PC-3 (cell line): ENCODE measurements at regions of chr19 and their contacts with region 1.

Region 1: DNA sequence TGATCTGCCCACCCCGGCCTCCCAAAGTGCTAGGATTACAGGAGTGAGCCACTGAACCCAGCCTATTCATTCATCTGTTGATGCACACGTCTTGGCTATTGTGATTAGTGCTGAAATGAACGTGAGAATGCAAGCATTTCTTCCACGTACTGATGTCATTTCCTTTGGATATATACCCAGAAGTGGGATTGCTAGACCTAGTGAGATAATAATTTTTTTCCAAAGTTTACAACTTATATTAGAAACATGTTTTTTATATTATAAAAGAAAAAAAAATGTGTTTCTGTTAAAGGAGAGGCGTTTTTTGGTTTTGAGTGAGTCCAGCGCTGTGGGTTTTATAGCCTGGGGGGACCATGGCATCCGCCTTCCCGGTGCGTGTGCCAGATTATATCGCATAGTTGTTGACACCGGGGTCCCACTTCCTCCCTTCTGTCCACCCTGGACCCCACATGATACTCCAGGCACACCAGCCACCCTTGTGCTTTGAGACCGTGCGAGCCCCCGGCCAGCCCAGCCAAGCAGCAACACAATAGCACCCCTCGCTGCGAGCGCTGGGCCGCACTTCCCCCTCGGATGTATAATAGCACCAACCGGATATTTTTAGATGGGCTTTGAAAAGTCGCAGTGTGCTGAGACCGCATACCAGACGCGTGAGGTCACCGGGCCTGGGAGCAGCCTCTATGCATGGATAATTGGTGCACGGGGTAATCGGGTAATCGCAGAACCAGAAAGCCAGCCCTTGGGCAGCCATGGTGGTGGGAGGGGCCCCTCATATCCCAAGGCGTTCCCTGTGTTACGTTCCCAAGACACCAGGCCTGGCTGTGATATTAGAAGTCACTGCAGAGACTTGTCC is 59.6 kb downstream of the MYO9B start:
- DNase-seq: peak; percentile 92
- ATAC-seq: peak; percentile 96
- H3K4me3 ChIP-seq: peak overlapping the region; percentile 54; the same call in 1 of the 2 replicates
- H3K27ac ChIP-seq: peak overlapping the region; percentile 78
- H3K4me1 ChIP-seq: peaks cover 25% of the 10 kb centered on the region
- H3K27me3 ChIP-seq: no peaks in the 10 kb centered on the region
- CTCF ChIP-seq: no peak; the same call in 1 of the 2 replicates

Region 2: DNA sequence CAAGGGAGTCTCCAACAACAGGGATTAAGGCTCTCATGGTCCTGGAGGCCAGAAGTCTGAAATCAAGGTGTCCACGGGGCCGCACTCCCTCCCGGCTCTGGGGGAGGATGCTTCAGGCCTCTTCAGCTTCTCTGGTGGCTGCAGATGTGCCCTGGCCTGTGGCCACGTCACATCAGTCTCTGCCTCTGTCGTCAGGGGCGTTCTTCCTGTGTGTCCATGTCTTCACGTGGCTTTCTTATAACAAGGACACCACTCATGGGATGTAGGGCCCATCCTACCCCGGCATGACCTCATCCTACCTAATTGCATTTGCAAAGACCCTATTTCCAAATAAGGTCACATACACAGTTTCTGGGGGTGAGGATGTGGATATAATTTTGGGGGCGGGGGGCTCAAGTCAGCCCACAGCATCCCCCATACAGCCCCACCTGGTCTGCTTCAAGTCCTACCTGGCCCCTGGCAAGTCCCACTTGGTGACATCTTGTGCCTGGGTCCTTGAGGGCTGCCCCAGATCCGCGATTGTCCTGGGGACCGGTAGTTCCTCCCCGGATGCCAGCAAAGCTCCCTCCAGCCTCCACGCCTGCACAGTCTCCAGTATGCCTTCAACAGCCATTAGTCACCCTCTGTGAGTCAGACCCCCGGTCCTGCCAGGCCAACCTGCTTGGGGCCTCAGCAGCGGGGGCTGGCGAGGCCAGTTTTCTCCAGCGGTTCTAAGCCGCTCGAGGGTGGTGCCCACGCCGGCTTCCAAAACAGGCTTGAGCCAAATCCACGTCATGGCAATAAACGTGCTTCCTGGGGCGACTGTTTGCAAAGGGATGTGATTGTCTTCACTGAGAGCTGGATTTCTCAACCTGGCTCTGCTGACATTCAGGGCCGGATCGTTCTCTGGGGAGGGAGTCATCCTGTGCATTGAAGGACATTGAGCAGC is 27.4 kb before region 1 on chr19:
- CTCF ChIA-PET with region 1: no interaction called
- POLR2A ChIA-PET with region 1: interaction called, 18 read pairs
- intact Hi-C with region 1: loop called (anchors 2 kb)
- DNase-seq: peak; percentile 99
- ATAC-seq: peak; percentile 98
- H3K4me3 ChIP-seq: peak overlapping the region; percentile 15; the same call in 1 of the 2 replicates
- H3K27ac ChIP-seq: peak overlapping the region; percentile 91
- H3K4me1 ChIP-seq: peaks cover 16% of the 10 kb centered on the region
- H3K27me3 ChIP-seq: no peaks in the 10 kb centered on the region
- CTCF ChIP-seq: no peak

Region 3: DNA sequence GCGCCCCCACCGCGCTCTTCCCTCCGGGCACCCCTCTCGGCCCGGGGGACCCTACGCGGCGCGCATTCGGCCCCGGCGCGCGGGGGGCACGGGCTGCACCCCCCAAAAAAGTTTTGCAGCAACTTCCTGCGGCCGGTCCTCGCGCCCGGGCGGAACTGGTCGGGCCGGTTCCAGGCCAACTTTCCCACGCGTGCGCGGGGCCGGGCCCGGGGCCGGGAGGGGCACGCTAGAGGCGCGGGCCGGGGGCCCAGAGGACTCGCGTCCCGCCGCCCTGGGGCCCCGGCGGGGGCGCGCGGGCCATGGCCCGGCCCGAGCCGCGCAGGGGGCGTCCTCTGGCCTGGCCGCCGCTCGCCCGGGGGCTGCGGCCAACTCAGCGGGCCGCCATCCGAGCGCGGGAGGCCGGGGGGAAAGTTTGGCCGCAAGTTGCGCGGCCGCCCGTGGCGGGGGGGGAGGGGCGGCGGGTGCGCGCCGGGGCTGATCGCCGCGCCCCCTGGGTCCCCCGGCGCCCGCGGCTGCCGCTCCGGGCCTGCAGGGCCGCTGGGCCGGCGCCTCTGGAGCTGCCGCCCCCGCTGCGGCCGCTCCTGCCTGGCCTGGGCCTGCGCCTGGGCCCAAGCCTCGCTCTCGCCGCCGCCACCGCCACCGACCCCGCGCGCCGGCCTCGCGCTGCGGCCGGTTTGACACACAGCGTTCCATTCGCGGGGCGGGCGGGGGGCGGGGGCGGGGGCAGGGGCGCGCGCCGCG is 110.2 kb after region 1 on chr19 and contains the start of gene NR2F6:
- CTCF ChIA-PET with region 1: no interaction called
- POLR2A ChIA-PET with region 1: interaction called, 15 read pairs
- intact Hi-C with region 1: no loop called
- DNase-seq: no peak
- ATAC-seq: peak; percentile 25
- H3K4me3 ChIP-seq: peak within 1 kb of the TSS; percentile 84
- H3K27ac ChIP-seq: no peak within 1 kb of the TSS; the same call in 1 of the 2 replicates
- H3K4me1 ChIP-seq: peaks cover 30% of the 10 kb centered on the region
- H3K27me3 ChIP-seq: no peaks in the 10 kb centered on the region
- CTCF ChIP-seq: no peak
- total RNA-seq, gene NR2F6: 134 and 159 TPM in 2 replicates